ENCODE measurements at regions of chrX and their contacts with region 1.

Region 1: GRCh38 chrX:71365876-71366673 is at the start of gene TAF1:
- DNase-seq: peak; percentile 78 to 97 (median 87)
- ATAC-seq: peak; percentile 86
- H3K4me3 ChIP-seq: peak within 1 kb of the TSS; percentile 92
- H3K4me3 Mint-ChIP-seq: peak within 1 kb of the TSS; percentile 98
- H3K27ac ChIP-seq: peak within 1 kb of the TSS; percentile 85 to 90
- H3K27ac Mint-ChIP-seq: peak within 1 kb of the TSS; percentile 97
- H3K4me1 ChIP-seq: peaks cover 34% of the 10 kb centered on the region
- H3K4me1 Mint-ChIP-seq: peaks cover 28% of the 10 kb centered on the region
- H3K27me3 ChIP-seq: no peaks in the 10 kb centered on the region
- H3K27me3 Mint-ChIP-seq: no peaks in the 10 kb centered on the region
- CTCF ChIP-seq: no peak
- total RNA-seq, gene TAF1: 61.0 to 62.2 TPM

Region 2: GRCh38 chrX:70970482-70970995 is 395.5 kb before region 1 on chrX:
- CTCF ChIA-PET with region 1: no interaction called
- POLR2A ChIA-PET with region 1: no interaction called
- intact Hi-C with region 1: loop called in 1 of 2 experiments (anchors 5 kb)
- DNase-seq: peak in 3 of 14 experiments; percentile 16 to 26 (median 24)
- ATAC-seq: no peak
- H3K4me3 ChIP-seq: no peak overlapping the region
- H3K4me3 Mint-ChIP-seq: no peak overlapping the region
- H3K27ac ChIP-seq: no peak overlapping the region
- H3K27ac Mint-ChIP-seq: no peak overlapping the region
- H3K4me1 ChIP-seq: peaks cover 4% of the 10 kb centered on the region
- H3K4me1 Mint-ChIP-seq: peaks cover 9% of the 10 kb centered on the region
- H3K27me3 ChIP-seq: no peaks in the 10 kb centered on the region
- H3K27me3 Mint-ChIP-seq: no peaks in the 10 kb centered on the region
- CTCF ChIP-seq: peak; percentile 38

Region 3: GRCh38 chrX:71111141-71111843 is 254.8 kb before region 1 on chrX and contains the start of gene IL2RG:
- CTCF ChIA-PET with region 1: no interaction called
- POLR2A ChIA-PET with region 1: interaction called, 19 read pairs
- intact Hi-C with region 1: loop called in 1 of 2 experiments (anchors 5 kb)
- DNase-seq: peak; percentile 56 to 94 (median 70)
- ATAC-seq: peak; percentile 81
- H3K4me3 ChIP-seq: peak within 1 kb of the TSS; percentile 93
- H3K4me3 Mint-ChIP-seq: peak within 1 kb of the TSS; percentile 98
- H3K27ac ChIP-seq: peak within 1 kb of the TSS; percentile 96 to 99
- H3K27ac Mint-ChIP-seq: peak within 1 kb of the TSS; percentile 99
- H3K4me1 ChIP-seq: peaks cover 56% of the 10 kb centered on the region
- H3K4me1 Mint-ChIP-seq: peaks cover 51% of the 10 kb centered on the region
- H3K27me3 ChIP-seq: no peaks in the 10 kb centered on the region
- H3K27me3 Mint-ChIP-seq: no peaks in the 10 kb centered on the region
- CTCF ChIP-seq: no peak
- total RNA-seq, gene IL2RG: 213 to 225 TPM

Region 4: DNA sequence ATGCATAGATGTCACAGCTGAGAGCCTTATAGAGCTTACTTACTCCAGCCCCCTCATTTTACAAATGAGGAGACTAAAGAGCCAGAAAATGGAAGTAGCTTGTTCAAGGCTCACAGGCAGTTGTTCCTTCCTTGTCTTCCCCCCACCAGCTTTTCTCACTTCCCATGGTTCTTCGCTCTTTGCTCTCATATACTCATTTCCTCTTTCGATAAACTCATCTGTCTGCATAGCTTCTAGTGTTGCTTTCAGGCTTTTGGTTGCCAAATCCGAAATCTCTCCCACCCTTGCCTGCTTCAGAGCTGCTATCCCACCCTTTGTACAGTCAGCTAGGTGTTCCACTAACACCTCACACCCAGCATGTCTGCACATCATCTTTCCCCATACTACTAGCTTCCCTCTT is 168.0 kb before region 1 on chrX:
- CTCF ChIA-PET with region 1: no interaction called
- POLR2A ChIA-PET with region 1: interaction called, 20 read pairs
- intact Hi-C with region 1: no loop called
- DNase-seq: peak in 4 of 14 experiments; percentile 18 to 59 (median 44)
- ATAC-seq: peak; percentile 49
- H3K4me3 ChIP-seq: peak overlapping the region; percentile 66
- H3K4me3 Mint-ChIP-seq: peak overlapping the region; percentile 84
- H3K27ac ChIP-seq: peak overlapping the region in 1 of 2 donors; percentile 34
- H3K27ac Mint-ChIP-seq: peak overlapping the region; percentile 77
- H3K4me1 ChIP-seq: peaks cover 12% of the 10 kb centered on the region
- H3K4me1 Mint-ChIP-seq: peaks cover 31% of the 10 kb centered on the region
- H3K27me3 ChIP-seq: no peaks in the 10 kb centered on the region
- H3K27me3 Mint-ChIP-seq: no peaks in the 10 kb centered on the region
- CTCF ChIP-seq: no peak

Region 5: DNA sequence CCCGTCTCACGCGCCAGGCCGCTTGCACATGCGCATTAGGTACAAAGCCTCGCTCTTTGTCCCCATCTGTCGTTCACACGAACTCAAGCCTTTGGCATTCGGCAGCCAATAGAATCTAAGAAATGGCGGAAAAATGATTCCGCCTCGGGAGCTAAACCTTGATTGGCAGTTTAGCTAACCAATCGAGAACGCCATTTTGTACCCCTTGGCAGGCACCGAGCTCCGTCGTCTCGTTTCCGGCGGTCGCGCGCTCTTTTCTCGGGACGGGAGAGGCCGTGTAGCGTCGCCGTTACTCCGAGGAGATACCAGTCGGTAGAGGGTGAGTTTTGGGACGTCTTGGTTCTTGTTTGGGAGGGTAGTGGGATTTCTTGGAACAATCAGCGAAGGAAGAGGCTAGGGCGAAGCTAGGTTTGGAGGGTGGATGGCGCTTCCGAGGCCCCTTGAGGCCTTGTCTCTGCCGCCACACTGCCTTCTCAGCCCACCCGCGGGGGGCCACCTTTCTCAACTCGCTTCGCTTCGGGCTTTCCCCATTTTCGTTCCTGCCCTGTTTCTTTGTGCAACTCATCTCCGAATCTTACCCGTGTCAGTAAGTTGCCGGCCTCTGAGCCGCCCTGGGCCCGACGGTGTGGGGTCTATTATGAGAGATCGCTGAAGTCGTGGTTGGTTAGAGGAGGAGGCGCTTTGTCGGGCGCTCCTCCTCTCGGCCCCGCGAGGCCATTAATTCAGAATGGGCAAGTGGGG is 82.5 kb before region 1 on chrX and contains the start of gene NONO:
- CTCF ChIA-PET with region 1: interaction called, 6 read pairs
- POLR2A ChIA-PET with region 1: interaction called, 89 read pairs
- intact Hi-C with region 1: loop called (anchors 2 kb)
- DNase-seq: peak; percentile 62 to 97 (median 78)
- ATAC-seq: peak; percentile 86
- H3K4me3 ChIP-seq: peak within 1 kb of the TSS; percentile 89
- H3K4me3 Mint-ChIP-seq: peak within 1 kb of the TSS; percentile 98
- H3K27ac ChIP-seq: peak within 1 kb of the TSS; percentile 85 to 97
- H3K27ac Mint-ChIP-seq: peak within 1 kb of the TSS; percentile 99
- H3K4me1 ChIP-seq: peaks cover 28% of the 10 kb centered on the region
- H3K4me1 Mint-ChIP-seq: peaks cover 34% of the 10 kb centered on the region
- H3K27me3 ChIP-seq: no peaks in the 10 kb centered on the region
- H3K27me3 Mint-ChIP-seq: no peaks in the 10 kb centered on the region
- CTCF ChIP-seq: no peak
- total RNA-seq, gene NONO: 440 to 472 TPM

Region 6: GRCh38 chrX:71315917-71316316 is 50.2 kb before region 1 on chrX:
- CTCF ChIA-PET with region 1: no interaction called
- POLR2A ChIA-PET with region 1: no interaction called
- intact Hi-C with region 1: no loop called
- DNase-seq: no peak
- ATAC-seq: no peak
- H3K4me3 ChIP-seq: no peak overlapping the region
- H3K4me3 Mint-ChIP-seq: no peak overlapping the region
- H3K27ac ChIP-seq: no peak overlapping the region
- H3K27ac Mint-ChIP-seq: no peak overlapping the region
- H3K4me1 ChIP-seq: no peaks in the 10 kb centered on the region
- H3K4me1 Mint-ChIP-seq: no peaks in the 10 kb centered on the region
- H3K27me3 ChIP-seq: no peaks in the 10 kb centered on the region
- H3K27me3 Mint-ChIP-seq: no peaks in the 10 kb centered on the region
- CTCF ChIP-seq: no peak

Measured in CD4-positive, alpha-beta T cell (primary cell).